Naive thymus-derived CD4-positive, alpha-beta T cell (primary cell): ENCODE measurements at regions of chr17 and their contacts with region 1.

Region 1: GRCh38 chr17:20315821-20316220 is 151.5 kb downstream of the LGALS9B start:
- DNase-seq: no peak
- ATAC-seq: no peak
- H3K4me3 ChIP-seq: no peak overlapping the region
- H3K4me3 Mint-ChIP-seq: no peak overlapping the region
- H3K27ac ChIP-seq: no peak overlapping the region
- H3K27ac Mint-ChIP-seq: no peak overlapping the region
- H3K4me1 ChIP-seq: no peaks in the 10 kb centered on the region
- H3K4me1 Mint-ChIP-seq: peaks cover 0 to 5% (median 1%) of the 10 kb centered on the region in 7 donors
- H3K27me3 ChIP-seq: no peaks in the 10 kb centered on the region
- H3K27me3 Mint-ChIP-seq: peaks cover 0 to 2% (median 0%) of the 10 kb centered on the region in 5 donors

Region 2: DNA sequence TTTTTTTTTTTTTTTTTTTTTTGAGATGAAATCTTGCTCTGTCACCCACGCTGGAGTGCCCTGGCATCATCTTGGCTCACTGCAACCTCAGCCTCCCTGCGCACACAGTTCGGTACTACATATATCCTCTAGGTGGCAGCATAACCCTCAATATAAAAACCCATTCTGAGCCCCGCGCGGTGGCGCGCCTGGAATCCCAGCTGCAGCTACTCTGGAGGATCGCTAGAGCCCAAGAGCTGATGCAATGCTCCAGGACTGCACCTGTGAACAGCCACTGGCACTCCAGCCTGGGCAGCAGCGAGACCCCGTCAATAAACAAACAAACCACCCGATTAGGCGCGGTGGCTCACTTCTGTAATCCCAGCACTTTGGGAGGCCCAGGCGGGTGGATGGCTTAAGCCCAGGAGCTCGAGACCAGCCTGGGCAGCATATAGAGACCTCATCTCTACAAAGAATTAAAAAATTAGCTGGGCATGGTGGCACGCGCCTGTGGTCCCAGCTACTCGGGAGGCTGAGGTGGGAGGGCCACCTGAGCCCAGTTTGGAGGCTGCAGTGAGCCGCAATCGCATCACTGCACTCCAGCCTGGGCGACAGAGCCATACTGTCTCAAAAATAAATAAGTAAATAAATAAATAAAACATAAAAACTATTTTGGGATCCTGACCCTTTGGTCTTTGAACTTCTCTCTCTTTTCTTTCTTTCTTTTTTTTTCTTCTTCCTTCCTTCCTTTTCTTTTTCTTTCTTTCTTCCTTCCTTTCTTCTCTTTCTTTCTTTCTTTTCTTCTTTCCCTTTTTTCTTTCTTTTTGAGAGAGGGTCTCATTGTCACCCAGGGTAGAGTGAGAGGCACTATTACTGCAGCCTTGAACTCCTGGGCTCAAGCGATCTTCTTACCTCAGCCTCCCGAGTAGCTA is 322.8 kb before region 1 on chr17:
- CTCF ChIA-PET with region 1: no interaction called
- POLR2A ChIA-PET with region 1: no interaction called
- intact Hi-C with region 1: loop called in 1 of 2 experiments (anchors 2 kb)
- DNase-seq: peak; percentile 52 to 79 (median 74)
- ATAC-seq: peak; percentile 100
- H3K4me3 ChIP-seq: no peak overlapping the region
- H3K4me3 Mint-ChIP-seq: peak overlapping the region in 7 of 10 donors; percentile 23 to 62 (median 56)
- H3K27ac ChIP-seq: no peak overlapping the region
- H3K27ac Mint-ChIP-seq: peak overlapping the region in 2 of 9 donors; percentile 14 to 36
- H3K4me1 ChIP-seq: no peaks in the 10 kb centered on the region
- H3K4me1 Mint-ChIP-seq: peaks cover 0 to 11% (median 9%) of the 10 kb centered on the region in 7 donors
- H3K27me3 ChIP-seq: no peaks in the 10 kb centered on the region
- H3K27me3 Mint-ChIP-seq: peaks cover 0 to 22% (median 15%) of the 10 kb centered on the region in 5 donors

Region 3: DNA sequence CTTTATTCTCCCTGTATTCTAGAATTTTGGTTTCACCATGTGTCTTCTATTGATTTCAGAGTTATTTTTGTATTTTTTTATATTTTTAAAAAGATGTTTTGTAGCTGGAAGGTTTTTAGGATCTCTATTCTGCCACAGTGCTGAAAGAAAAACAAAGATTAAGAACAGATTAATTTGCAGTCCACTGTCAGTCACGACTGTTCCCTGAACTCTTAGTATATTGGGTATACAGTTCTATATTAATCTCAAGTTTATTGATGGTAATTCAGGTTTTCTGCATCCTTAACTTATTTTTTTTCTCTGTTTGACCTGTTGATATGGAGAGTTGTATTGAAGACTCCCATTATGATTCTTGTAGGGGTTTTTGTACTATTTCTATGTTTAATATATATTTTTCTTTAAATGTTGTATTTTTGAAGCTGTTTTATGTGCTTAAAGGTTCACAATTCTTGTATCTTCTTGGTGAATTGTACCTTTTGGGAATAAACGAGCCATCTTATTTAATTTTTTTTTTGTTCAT is 303.7 kb before region 1 on chr17:
- CTCF ChIA-PET with region 1: no interaction called
- POLR2A ChIA-PET with region 1: no interaction called
- intact Hi-C with region 1: no loop called
- DNase-seq: no peak
- ATAC-seq: no peak
- H3K4me3 ChIP-seq: no peak overlapping the region
- H3K4me3 Mint-ChIP-seq: no peak overlapping the region
- H3K27ac ChIP-seq: no peak overlapping the region
- H3K27ac Mint-ChIP-seq: no peak overlapping the region
- H3K4me1 ChIP-seq: no peaks in the 10 kb centered on the region
- H3K4me1 Mint-ChIP-seq: peaks cover 6 to 17% (median 14%) of the 10 kb centered on the region in 7 donors
- H3K27me3 ChIP-seq: peaks cover 0 to 3% of the 10 kb centered on the region in 2 donors
- H3K27me3 Mint-ChIP-seq: peaks cover 50 to 64% (median 57%) of the 10 kb centered on the region in 5 donors

Region 4: GRCh38 chr17:20121359-20122253 is 194.2 kb before region 1 on chr17:
- CTCF ChIA-PET with region 1: interaction called, 7 read pairs
- POLR2A ChIA-PET with region 1: no interaction called
- intact Hi-C with region 1: loop called (anchors 1 kb)
- DNase-seq: peak; percentile 42 to 71 (median 64)
- ATAC-seq: peak; percentile 80
- H3K4me3 ChIP-seq: no peak overlapping the region
- H3K4me3 Mint-ChIP-seq: no peak overlapping the region
- H3K27ac ChIP-seq: no peak overlapping the region
- H3K27ac Mint-ChIP-seq: no peak overlapping the region
- H3K4me1 ChIP-seq: no peaks in the 10 kb centered on the region
- H3K4me1 Mint-ChIP-seq: peaks cover 0 to 3% (median 0%) of the 10 kb centered on the region in 7 donors
- H3K27me3 ChIP-seq: no peaks in the 10 kb centered on the region
- H3K27me3 Mint-ChIP-seq: peaks cover 0 to 18% (median 0%) of the 10 kb centered on the region in 5 donors

Region 5: DNA sequence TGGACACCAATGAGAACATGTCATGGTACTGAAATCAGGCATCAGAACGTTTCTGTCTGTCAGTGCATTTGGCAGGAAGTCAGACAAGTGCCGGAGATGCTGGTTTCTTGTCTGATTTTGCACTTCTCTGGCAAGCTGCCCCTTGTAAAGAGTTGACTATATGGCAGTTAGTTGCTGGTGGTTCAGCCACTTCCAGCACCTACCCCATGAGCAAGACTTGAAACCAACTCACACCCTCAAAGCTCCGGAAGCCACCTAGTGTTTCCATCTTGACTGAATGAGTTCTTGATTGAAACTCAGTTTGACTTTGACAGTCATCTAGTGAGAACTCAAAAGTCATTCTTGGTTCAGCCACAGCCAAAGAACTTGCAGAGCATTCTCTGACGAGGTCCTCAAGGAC is 81.5 kb before region 1 on chr17:
- CTCF ChIA-PET with region 1: interaction called, 3 read pairs
- POLR2A ChIA-PET with region 1: no interaction called
- intact Hi-C with region 1: loop called in 1 of 2 experiments (anchors 2 kb)
- DNase-seq: peak in 8 of 9 donors; percentile 58 to 79 (median 69)
- ATAC-seq: peak; percentile 93
- H3K4me3 ChIP-seq: peak overlapping the region; percentile 19
- H3K4me3 Mint-ChIP-seq: peak overlapping the region; percentile 64 to 84 (median 69)
- H3K27ac ChIP-seq: peak overlapping the region; percentile 26
- H3K27ac Mint-ChIP-seq: peak overlapping the region; percentile 74 to 92 (median 88)
- H3K4me1 ChIP-seq: peaks cover 4 to 24% of the 10 kb centered on the region in 2 donors
- H3K4me1 Mint-ChIP-seq: peaks cover 29 to 73% (median 60%) of the 10 kb centered on the region in 7 donors
- H3K27me3 ChIP-seq: no peaks in the 10 kb centered on the region
- H3K27me3 Mint-ChIP-seq: no peaks in the 10 kb centered on the region